Heart right ventricle (tissue), 16 donors: ENCODE measurements at regions of chr5 and their contacts with region 1.

Region 1: DNA sequence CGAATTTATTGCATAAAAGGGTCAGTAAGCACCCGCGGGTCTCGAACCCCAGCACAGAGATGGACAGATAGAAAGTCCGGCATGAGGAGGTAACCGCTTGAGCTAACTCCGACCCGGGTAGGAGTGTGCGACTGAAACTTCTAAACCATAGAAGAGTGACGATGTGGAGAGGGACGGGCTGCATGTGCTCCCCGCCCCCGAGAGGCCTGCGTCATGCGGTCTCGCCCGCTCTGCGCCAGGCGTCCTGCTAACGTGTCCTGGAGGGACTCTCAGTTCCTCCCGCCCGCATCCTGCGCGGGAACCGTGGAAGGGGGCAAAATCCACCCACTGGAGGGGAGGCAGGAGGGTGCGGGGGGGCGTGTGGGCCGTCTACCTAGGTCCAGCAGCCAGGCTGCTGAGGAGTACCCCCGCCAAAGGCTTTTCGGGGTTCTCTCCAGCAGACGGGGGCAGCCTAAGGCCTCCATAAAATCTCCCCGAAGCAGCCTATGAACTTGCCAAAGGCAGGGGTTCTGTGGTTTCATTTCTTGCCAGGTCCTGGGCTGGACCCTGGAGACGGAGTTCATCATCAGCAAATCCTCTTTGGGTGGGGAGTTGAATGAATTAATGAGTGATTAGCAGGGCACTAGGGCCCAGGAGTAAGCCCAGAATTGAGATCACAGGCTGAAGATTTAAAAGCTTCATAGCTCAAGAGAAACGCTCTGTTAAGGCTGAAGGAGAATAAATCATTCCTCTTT is 51.9 kb downstream of the TGFBI start:
- DNase-seq: peak; percentile 84 to 87
- ATAC-seq: peak; percentile 89 to 98 (median 93)
- H3K4me3 ChIP-seq: peak overlapping the region in 9 of 10 donors; percentile 23 to 51 (median 39)
- H3K27ac ChIP-seq: peak overlapping the region; percentile 65 to 88 (median 75)
- H3K4me1 ChIP-seq: peaks cover 0 to 46% (median 22%) of the 10 kb centered on the region in 9 donors
- H3K27me3 ChIP-seq: peaks cover 0 to 28% (median 0%) of the 10 kb centered on the region in 7 donors
- CTCF ChIP-seq: no peak

Region 2: DNA sequence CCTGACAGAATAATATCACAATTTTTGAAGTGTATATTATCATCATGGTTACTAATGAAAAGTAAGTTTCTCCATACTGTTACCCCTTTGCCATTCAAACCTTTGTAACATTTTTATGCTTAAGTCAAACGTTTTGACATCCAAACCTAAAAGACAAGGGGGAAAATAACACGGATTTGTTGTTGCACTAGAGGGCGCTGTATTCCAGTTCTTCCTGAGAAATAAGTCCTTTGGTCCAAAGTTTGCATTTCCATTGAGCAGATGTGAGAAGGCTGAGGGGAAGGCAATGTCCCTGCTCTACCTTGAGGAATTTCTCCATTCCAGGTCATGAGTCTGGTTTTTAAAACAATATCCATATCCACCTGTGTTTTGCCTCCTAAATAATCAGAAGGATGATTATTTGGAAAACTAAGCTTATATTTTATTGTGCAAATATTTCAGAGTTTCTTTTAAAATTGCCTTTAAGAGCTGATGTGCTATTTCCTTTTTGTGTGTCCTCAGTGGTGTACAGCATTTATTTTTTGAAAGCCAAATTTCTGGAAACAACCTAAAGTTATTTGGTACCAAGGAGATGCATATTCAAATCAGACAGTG is 135.6 kb before region 1 on chr5:
- intact Hi-C with region 1: loop called in 6 of 10 experiments (anchors 1 to 5 kb)
- DNase-seq: peak in 1 of 2 donors; percentile 68
- ATAC-seq: peak in 5 of 8 donors; percentile 55 to 76 (median 68)
- H3K4me3 ChIP-seq: no peak overlapping the region
- H3K27ac ChIP-seq: no peak overlapping the region
- H3K4me1 ChIP-seq: peaks cover 0 to 8% (median 0%) of the 10 kb centered on the region in 9 donors
- H3K27me3 ChIP-seq: peaks cover 0 to 19% (median 0%) of the 10 kb centered on the region in 7 donors
- CTCF ChIP-seq: peak; percentile 67 to 89 (median 79)

Region 3: DNA sequence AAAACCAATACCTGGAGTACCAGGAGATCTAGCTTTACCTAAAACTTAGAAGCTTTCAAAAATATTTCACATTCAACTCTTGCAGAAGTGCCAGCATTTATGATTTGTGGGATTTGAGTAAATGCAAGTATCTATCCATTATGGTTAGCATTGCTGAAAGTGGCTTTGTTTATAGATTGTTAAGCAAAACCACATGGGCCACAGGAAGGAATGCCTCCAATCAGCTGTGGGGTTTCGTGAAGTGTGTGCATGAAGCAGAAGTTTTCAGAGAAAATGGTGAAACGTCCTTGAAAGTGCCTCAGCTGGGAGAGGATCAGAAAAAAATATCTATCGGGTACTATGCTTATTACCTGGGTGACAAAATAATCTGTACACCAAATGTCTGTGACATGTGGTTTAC is 130.0 kb before region 1 on chr5:
- intact Hi-C with region 1: loop called in 5 of 10 experiments (anchors 1 to 5 kb)
- DNase-seq: no peak
- ATAC-seq: no peak
- H3K4me3 ChIP-seq: no peak overlapping the region
- H3K27ac ChIP-seq: no peak overlapping the region
- H3K4me1 ChIP-seq: no peaks in the 10 kb centered on the region
- H3K27me3 ChIP-seq: no peaks in the 10 kb centered on the region
- CTCF ChIP-seq: no peak

Region 4: DNA sequence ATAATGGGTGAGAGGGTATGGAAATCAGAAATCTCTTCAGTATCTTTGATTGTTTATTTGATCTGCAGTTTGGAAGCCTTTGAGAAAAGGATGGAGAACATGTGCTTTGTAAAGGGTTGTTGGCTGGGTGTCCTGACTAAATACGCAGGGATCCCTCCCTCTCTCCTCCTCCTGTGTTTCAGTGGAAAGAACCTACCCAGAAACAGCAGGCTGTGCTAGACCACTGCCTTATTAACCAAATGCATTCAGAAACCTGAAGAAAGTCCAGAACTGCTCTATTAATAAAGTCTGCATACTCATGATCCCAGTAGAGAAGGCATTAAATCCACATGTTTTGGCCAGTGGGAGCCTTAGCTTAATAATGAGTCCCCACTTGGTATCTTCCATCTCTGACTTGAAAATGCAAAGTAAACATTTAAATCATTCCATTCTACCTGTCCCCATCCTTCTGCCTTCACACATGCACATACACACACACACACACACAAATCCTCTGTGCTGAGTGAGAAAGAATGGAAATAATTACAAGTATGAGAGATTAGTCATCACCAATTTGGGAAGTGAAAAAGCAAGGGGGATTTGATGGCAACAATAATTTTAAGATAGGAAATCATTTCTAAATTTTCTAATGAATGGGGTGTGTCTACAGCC is 115.9 kb before region 1 on chr5:
- intact Hi-C with region 1: loop called in 1 of 10 experiments (anchors 5 kb)
- DNase-seq: no peak
- ATAC-seq: peak in 6 of 8 donors; percentile 42 to 67 (median 54)
- H3K4me3 ChIP-seq: no peak overlapping the region
- H3K27ac ChIP-seq: no peak overlapping the region
- H3K4me1 ChIP-seq: peaks cover 0 to 9% (median 0%) of the 10 kb centered on the region in 9 donors
- H3K27me3 ChIP-seq: peaks cover 0 to 4% (median 0%) of the 10 kb centered on the region in 7 donors
- CTCF ChIP-seq: peak in 2 of 9 donors; percentile 41 to 43